Tibial artery (tissue), 4 donors: ENCODE measurements at regions of chr13 and their contacts with region 1.

Region 1: DNA sequence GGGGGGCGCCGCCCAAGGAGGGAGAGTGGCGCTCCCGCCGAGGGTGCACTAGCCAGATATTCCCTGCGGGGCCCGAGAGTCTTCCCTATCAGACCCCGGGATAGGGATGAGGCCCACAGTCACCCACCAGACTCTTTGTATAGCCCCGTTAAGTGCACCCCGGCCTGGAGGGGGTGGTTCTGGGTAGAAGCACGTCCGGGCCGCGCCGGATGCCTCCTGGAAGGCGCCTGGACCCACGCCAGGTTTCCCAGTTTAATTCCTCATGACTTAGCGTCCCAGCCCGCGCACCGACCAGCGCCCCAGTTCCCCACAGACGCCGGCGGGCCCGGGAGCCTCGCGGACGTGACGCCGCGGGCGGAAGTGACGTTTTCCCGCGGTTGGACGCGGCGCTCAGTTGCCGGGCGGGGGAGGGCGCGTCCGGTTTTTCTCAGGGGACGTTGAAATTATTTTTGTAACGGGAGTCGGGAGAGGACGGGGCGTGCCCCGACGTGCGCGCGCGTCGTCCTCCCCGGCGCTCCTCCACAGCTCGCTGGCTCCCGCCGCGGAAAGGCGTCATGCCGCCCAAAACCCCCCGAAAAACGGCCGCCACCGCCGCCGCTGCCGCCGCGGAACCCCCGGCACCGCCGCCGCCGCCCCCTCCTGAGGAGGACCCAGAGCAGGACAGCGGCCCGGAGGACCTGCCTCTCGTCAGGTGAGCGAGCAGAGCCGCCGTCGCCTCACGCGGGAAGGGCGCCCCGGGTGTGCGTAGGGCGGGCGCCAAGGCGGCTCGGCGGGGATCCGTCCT is at the start of gene RB1:
- DNase-seq: peak; percentile 88 to 95
- H3K4me3 ChIP-seq: peak within 1 kb of the TSS; percentile 85 to 94
- H3K27ac ChIP-seq: peak within 1 kb of the TSS; percentile 94 to 99
- H3K4me1 ChIP-seq: peaks cover 0 to 33% (median 14%) of the 10 kb centered on the region in 4 donors
- H3K27me3 ChIP-seq: no peaks in the 10 kb centered on the region
- CTCF ChIP-seq: peak in 1 of 2 experiments; percentile 4

Region 2: GRCh38 chr13:48028052-48028451 is 275.5 kb before region 1 on chr13:
- intact Hi-C with region 1: no loop called
- DNase-seq: no peak
- H3K4me3 ChIP-seq: no peak overlapping the region
- H3K27ac ChIP-seq: no peak overlapping the region
- H3K4me1 ChIP-seq: no peaks in the 10 kb centered on the region
- H3K27me3 ChIP-seq: no peaks in the 10 kb centered on the region
- CTCF ChIP-seq: no peak

Region 3: DNA sequence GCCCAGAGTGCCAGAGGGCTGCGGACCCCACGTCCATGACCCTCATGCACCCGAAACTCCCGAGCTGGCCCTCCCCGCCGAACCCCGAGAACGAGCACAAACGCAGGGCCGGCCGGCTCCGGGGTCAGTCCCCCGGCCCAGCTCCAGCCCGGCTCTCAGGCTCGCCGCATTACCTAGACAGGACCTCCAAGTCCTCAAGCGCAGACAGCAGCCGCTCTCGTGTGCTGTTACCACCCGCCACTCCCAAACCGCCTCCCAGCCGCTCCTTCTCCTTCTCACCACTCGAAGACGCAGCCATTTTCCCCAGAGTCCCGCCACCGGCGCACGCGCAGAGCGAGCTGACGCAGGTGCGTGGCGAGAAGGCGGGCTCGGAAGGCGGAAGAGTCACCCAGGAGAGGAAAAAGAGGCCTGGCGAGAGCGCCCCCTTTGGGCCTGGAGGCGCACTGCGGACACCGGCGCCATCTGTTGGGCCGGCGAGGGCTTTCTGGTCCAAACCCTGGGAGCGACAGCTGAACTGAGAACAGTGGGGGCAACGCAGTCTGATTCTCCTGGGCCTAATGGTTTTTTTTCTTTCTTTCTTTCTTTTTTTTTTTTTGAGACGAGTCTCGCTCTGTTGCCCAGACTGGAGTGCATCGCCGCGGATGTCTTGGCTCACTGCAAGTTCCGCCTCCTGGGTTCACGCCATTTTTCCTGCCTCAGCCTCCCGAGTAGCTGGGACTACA is 208.6 kb before region 1 on chr13 and contains the start of gene MED4:
- intact Hi-C with region 1: loop called (anchors 2 kb)
- DNase-seq: peak; percentile 93 to 96
- H3K4me3 ChIP-seq: peak within 1 kb of the TSS; percentile 72 to 95
- H3K27ac ChIP-seq: peak within 1 kb of the TSS; percentile 87 to 93
- H3K4me1 ChIP-seq: peaks cover 0 to 36% (median 24%) of the 10 kb centered on the region in 4 donors
- H3K27me3 ChIP-seq: no peaks in the 10 kb centered on the region
- CTCF ChIP-seq: peak; percentile 98 to 100

Region 4: DNA sequence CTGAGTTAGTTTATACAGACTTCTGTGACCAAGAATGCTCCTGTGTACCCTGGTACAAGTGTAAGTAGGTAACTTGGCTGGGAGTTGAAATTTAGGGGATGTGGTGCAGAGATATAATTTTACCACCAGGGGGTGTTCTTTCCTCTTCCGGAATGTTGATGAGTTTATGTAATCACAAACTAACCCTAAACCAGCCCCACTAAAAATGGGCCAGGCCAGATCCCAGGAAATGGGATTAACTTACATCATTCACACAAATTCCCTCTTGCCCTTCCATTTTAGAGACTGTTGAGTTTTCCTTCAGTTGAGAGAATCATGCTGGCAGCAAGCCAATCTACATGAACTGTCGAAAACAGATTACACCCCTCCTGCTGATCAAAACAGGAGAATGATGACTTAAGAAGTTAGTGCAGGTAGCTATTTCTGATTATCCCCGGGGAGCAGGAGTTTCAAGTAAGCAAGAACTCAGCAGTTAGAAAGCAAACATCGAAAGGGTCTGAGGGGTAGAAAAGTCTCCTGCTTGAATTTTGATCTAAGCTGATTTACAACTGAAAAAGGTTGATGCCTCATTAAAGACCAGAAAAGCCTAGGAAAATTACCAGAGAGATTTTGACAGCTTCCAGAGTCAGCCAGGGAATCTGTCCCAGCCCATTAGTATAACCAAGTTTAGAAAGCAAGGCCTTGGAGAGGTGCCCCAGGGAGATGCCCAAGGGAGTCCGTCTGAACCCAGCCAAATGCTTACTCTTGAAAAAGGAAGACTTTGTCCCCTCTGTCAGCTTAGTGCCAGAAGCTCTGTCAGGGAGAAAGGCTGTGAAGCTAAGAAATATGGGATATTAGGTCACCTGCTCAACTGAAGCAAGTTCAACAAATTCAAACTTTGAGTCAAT is 176.4 kb before region 1 on chr13:
- intact Hi-C with region 1: loop called (anchors 5 kb)
- DNase-seq: peak; percentile 82 to 93
- H3K4me3 ChIP-seq: peak overlapping the region in 1 of 2 donors; percentile 8
- H3K27ac ChIP-seq: peak overlapping the region; percentile 76 to 83
- H3K4me1 ChIP-seq: peaks cover 0 to 37% (median 28%) of the 10 kb centered on the region in 4 donors
- H3K27me3 ChIP-seq: no peaks in the 10 kb centered on the region
- CTCF ChIP-seq: peak; percentile 70 to 73

Region 5: DNA sequence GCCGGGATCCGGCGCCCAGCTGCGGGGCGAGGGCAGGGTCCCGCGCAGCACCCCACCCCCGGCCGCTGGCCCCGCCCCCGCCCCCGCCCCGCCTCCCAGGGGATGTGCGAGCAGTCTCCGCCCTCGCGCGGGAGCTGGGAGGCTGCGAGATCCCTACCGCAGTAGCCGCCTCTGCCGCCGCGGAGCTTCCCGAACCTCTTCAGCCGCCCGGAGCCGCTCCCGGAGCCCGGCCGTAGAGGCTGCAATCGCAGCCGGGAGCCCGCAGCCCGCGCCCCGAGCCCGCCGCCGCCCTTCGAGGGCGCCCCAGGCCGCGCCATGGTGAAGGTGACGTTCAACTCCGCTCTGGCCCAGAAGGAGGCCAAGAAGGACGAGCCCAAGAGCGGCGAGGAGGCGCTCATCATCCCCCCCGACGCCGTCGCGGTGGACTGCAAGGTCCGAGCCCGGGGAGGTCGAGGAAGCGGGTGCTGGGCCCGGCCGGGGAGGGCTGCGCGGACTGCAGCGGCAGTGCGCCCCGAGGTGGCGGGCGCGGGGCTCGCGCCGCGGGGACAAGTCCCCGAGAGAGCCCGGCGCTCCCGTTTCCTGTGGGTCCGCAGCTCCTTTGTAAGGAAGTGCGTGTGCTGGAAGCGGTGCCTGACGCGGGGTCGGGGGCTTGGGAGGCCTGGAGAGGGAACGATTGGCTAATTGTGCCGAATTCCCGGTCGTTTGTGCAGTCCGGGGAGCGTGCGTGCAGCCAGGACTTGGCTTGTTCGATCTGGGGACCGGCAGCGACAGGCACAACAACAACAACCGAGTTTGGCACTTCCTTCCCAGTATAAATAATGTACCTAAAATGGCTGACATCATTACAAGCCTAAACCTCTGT is 70.3 kb before region 1 on chr13 and contains the start of gene ITM2B:
- intact Hi-C with region 1: loop called (anchors 10 kb)
- DNase-seq: peak; percentile 62 to 88
- H3K4me3 ChIP-seq: peak within 1 kb of the TSS; percentile 78 to 91
- H3K27ac ChIP-seq: peak within 1 kb of the TSS; percentile 94 to 99
- H3K4me1 ChIP-seq: peaks cover 0 to 44% (median 29%) of the 10 kb centered on the region in 4 donors
- H3K27me3 ChIP-seq: no peaks in the 10 kb centered on the region
- CTCF ChIP-seq: peak; percentile 29 to 44